ENCODE measurements at regions of chr1 and their contacts with region 1.

Region 1: GRCh38 chr1:92916902-92917301 is 44.4 kb downstream of the DIPK1A start:
- DNase-seq: peak; percentile 76
- ATAC-seq: peak; percentile 76
- H3K4me3 ChIP-seq: no peak overlapping the region
- H3K27ac ChIP-seq: peak overlapping the region; percentile 69; the same call in 1 of the 2 replicates
- H3K4me1 ChIP-seq: peaks cover 14% of the 10 kb centered on the region
- H3K27me3 ChIP-seq: no peaks in the 10 kb centered on the region
- CTCF ChIP-seq: no peak
- POLR2A ChIP-seq: no peak
- RAD21 ChIP-seq: no peak

Region 2: GRCh38 chr1:92877792-92878191 is 39.1 kb before region 1 on chr1:
- CTCF ChIA-PET with region 1: no interaction called
- POLR2A ChIA-PET with region 1: no interaction called
- dilution Hi-C with region 1: no loop called
- in situ Hi-C with region 1: no loop called
- intact Hi-C with region 1: no loop called
- DNase-seq: peak; percentile 46
- ATAC-seq: no peak
- H3K4me3 ChIP-seq: no peak overlapping the region
- H3K27ac ChIP-seq: no peak overlapping the region
- H3K4me1 ChIP-seq: no peaks in the 10 kb centered on the region
- H3K27me3 ChIP-seq: no peaks in the 10 kb centered on the region
- CTCF ChIP-seq: no peak
- POLR2A ChIP-seq: no peak
- RAD21 ChIP-seq: no peak

Region 3: DNA sequence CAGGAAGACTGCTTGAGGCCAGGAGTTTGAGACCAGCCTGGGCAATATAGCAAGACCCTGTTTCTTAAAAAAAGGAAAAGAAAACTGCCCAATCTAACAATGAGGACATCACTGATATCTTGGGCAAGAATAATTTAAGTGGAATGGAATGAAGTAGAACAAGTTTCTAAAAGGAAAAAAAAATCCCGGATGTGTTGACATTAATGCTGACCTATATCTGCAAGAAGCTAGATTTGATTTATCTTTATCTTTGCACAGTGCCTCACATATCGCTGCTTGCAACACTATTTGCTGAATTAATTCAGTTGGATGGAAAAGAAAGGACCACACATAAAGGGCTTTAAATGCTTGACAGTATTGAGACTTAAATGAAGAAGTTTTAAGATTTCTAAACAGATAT is 16.6 kb after region 1 on chr1:
- CTCF ChIA-PET with region 1: interaction called, 4 read pairs
- POLR2A ChIA-PET with region 1: no interaction called
- dilution Hi-C with region 1: no loop called
- in situ Hi-C with region 1: no loop called
- intact Hi-C with region 1: loop called (anchors 2 kb)
- DNase-seq: peak; percentile 47
- ATAC-seq: peak; percentile 33
- H3K4me3 ChIP-seq: no peak overlapping the region
- H3K27ac ChIP-seq: peak overlapping the region; percentile 61; the same call in 1 of the 2 replicates
- H3K4me1 ChIP-seq: peaks cover 11% of the 10 kb centered on the region
- H3K27me3 ChIP-seq: no peaks in the 10 kb centered on the region
- CTCF ChIP-seq: no peak
- POLR2A ChIP-seq: no peak
- RAD21 ChIP-seq: no peak

Region 4: DNA sequence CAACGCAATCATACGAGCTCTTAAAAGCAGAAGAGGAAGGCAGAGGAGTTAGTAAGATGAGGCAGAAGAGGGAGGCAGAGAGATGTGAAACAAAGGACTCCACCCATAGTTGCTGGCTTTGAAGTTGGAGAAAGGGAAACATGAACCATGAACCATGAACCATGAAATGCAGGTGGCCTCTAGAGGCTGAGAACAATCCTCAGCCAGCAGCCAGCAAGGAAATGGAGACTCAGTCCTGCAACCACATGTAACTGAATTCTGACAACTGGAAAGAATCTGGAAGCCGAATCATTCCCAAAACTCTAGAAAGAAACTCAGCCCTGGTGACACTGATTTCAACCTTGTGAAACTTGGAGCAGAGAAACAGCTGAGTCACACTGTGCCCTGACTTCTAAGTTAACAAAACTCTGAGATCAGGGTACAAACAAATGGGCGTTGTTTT is 34.3 kb after region 1 on chr1:
- CTCF ChIA-PET with region 1: no interaction called
- POLR2A ChIA-PET with region 1: interaction called, 3 read pairs
- dilution Hi-C with region 1: no loop called
- in situ Hi-C with region 1: no loop called
- intact Hi-C with region 1: loop called (anchors 5 kb)
- DNase-seq: peak; percentile 71
- ATAC-seq: peak; percentile 64
- H3K4me3 ChIP-seq: no peak overlapping the region; the same call in 1 of the 2 replicates
- H3K27ac ChIP-seq: peak overlapping the region; percentile 66
- H3K4me1 ChIP-seq: peaks cover 8% of the 10 kb centered on the region
- H3K27me3 ChIP-seq: no peaks in the 10 kb centered on the region
- CTCF ChIP-seq: no peak
- POLR2A ChIP-seq: no peak
- RAD21 ChIP-seq: no peak